ENCODE measurements at regions of chr6 and their contacts with region 1.

Region 1: DNA sequence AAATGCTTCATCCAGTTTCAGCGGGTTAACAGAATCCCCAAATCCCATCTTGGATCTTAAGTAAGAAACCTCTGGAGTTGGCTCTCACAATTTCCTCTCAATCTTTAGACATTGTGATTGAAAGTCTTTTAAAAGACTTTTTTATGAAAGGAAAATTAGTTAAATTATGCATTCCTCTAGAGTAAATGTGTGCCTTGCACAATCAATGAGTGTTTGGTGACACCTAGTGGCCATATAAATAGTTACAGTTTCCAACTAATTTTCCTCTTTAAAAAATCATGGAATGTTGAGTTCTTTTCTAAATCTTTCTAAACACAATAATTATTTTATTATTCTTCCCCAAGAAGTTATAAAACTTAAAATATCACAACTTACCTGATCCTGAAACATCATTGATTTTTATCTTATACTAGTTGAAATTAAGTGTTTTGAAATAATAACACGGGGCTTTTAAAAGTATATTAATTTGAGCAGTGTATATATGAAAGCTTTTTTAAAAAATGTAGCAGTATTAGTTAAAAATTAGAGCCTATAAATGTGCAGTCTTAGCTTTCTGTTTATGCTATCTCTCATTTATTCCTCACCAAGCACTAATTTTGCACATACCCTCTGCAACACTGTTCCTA is 66.4 kb downstream of the PKHD1 start:
- DNase-seq: no peak
- H3K4me3 ChIP-seq: no peak overlapping the region
- H3K27ac ChIP-seq: no peak overlapping the region
- H3K4me1 ChIP-seq: peaks cover 0 to 4% of the 10 kb centered on the region in 2 donors
- H3K27me3 ChIP-seq: no peaks in the 10 kb centered on the region
- CTCF ChIP-seq: peak; percentile 25 to 75 (median 71)
- POLR2A ChIP-seq: no peak

Region 2: GRCh38 chr6:50816115-50816675 is 1204.9 kb before region 1 on chr6:
- intact Hi-C with region 1: loop called (anchors 10 kb)
- DNase-seq: peak; percentile 58 to 72
- H3K4me3 ChIP-seq: peak overlapping the region in 1 of 3 donors; percentile 8
- H3K27ac ChIP-seq: no peak overlapping the region
- H3K4me1 ChIP-seq: peaks cover 10 to 15% of the 10 kb centered on the region in 2 donors
- H3K27me3 ChIP-seq: peaks cover 25% of the 10 kb centered on the region
- CTCF ChIP-seq: peak; percentile 40 to 84 (median 67)
- POLR2A ChIP-seq: no peak

Region 3: DNA sequence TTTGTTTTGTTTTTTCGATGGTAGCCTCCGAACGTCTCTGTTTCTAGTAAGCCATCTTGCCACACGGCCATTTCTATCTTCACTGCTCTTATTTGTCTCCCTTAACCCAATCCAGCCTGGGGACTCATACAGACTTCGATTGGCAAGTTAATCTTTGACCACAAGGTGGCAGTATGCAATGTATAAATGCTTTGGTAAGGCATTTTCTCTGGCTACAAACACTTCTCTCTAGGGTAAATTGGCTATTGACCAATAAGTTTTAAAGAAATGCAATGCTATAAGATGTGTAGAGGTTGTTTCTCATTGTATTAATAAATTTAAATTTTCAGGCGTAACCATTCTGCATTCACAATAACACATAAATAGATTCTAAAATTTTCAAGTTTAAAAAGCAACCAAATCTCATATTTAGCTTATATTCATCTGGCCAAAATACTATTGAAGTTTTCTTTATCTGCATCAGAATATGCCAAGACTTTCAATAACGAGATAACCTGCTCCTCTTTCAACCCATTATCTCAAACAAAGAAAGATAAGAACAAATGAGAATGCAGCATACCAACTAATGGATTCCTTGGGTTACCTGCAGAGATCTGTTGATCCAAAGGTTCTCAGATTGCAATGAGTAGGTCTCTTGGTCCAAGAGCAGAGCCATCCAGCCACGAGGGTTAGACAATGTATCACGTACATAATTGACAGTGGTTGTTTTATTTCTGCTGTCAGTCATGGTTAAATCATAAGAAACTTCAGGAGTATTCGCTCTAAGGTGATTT is 165.6 kb before region 1 on chr6:
- intact Hi-C with region 1: loop called (anchors 10 kb)
- DNase-seq: no peak
- H3K4me3 ChIP-seq: no peak overlapping the region
- H3K27ac ChIP-seq: no peak overlapping the region
- H3K4me1 ChIP-seq: no peaks in the 10 kb centered on the region
- H3K27me3 ChIP-seq: no peaks in the 10 kb centered on the region
- CTCF ChIP-seq: peak; percentile 23 to 62 (median 49)
- POLR2A ChIP-seq: no peak